ENCODE measurements at regions of chr2 and their contacts with region 1.

Region 1: GRCh38 chr2:205776139-205776538 is 93.8 kb downstream of the NRP2 start:
- DNase-seq: peak in 7 of 10 donors; percentile 14 to 84 (median 54)

Region 2: GRCh38 chr2:205650450-205650849 is 125.7 kb before region 1 on chr2:
- intact Hi-C with region 1: no loop called
- DNase-seq: no peak

Region 3: GRCh38 chr2:205885492-205886099 is 109.5 kb after region 1 on chr2:
- intact Hi-C with region 1: loop called (anchors 5 kb)
- DNase-seq: peak; percentile 27 to 92 (median 77)